Activated CD8-positive, alpha-beta T cell treated with anti-CD3 and anti-CD28 coated beads for 36 hours (primary cell): ENCODE measurements at regions of chr1 and their contacts with region 1.

Region 1: GRCh38 chr1:204494281-204495077 is at the start of gene PIK3C2B:
- DNase-seq: peak; percentile 81
- ATAC-seq: peak; percentile 80
- H3K4me3 Mint-ChIP-seq: peak within 1 kb of the TSS; percentile 88
- H3K27ac Mint-ChIP-seq: peak within 1 kb of the TSS; percentile 94
- H3K4me1 Mint-ChIP-seq: peaks cover 46% of the 10 kb centered on the region
- H3K27me3 Mint-ChIP-seq: no peaks in the 10 kb centered on the region
- CTCF ChIP-seq: peak; percentile 58
- total RNA-seq, gene PIK3C2B: 26.6 to 28.9 TPM

Region 2: DNA sequence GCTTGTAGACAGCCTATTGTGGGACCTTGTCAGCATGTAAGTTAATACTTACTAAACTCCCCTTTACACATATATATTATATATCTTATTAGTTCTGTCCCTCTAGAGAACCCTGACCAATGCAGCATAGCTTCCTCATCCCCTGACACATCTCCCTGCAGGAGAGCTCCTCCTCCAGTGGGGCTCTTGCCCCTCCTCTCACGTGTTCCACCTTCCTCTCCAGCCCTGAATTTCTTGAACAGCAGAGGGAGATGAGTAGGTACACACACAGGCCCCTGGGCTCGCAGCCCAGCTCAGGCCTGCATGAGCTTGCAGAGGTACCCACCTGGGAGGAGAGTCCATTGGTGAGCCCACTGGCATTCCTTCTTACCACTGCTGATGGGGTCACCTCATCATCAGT is 253.4 kb before region 1 on chr1:
- CTCF ChIA-PET with region 1: no interaction called
- POLR2A ChIA-PET with region 1: no interaction called
- intact Hi-C with region 1: no loop called
- DNase-seq: no peak
- ATAC-seq: no peak
- H3K4me3 Mint-ChIP-seq: no peak overlapping the region
- H3K27ac Mint-ChIP-seq: no peak overlapping the region
- H3K4me1 Mint-ChIP-seq: no peaks in the 10 kb centered on the region
- H3K27me3 Mint-ChIP-seq: peaks cover 1% of the 10 kb centered on the region
- CTCF ChIP-seq: no peak

Region 3: DNA sequence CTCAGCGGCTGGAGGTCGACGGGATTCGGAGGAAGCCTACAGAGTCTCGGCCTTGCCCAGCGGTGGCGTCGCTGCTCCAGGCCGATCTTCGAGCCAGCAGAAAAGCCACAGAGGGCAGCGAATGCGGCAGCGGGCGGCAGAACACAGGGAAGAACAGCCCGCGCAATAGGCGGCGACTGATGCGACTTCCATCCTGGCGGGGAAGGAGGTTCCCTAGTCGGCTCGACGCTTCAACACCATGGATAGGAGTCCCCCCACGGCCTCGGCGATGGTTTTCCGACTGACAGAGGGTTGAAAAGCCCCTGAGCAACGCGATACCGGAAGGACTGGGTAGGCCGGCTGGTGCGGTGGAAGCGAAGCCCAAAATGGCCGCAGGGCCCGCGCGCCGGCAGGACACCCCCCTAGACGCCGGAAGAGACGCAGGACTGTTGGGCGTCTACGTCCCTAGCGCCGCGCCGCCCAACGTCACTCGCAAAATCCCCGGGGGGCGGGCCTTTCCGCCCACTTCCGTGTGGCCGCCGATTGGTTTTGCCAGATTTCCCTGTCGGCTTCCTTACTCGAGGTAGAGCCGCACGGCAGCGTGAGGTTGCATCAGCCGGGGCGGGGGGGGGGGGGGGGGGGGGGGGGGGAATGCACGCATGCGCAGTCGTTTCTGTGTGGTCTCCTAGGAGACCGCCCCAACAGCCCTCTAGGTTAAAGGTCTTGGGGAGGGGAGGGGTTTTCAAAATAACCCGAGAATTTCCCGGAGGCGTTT is 82.9 kb before region 1 on chr1 and contains the start of gene PPP1R15B:
- CTCF ChIA-PET with region 1: interaction called, 3 read pairs
- POLR2A ChIA-PET with region 1: interaction called, 12 read pairs
- intact Hi-C with region 1: no loop called
- DNase-seq: peak; percentile 97
- ATAC-seq: peak; percentile 92
- H3K4me3 Mint-ChIP-seq: peak within 1 kb of the TSS; percentile 99
- H3K27ac Mint-ChIP-seq: peak within 1 kb of the TSS; percentile 100
- H3K4me1 Mint-ChIP-seq: peaks cover 19% of the 10 kb centered on the region
- H3K27me3 Mint-ChIP-seq: no peaks in the 10 kb centered on the region
- CTCF ChIP-seq: no peak
- total RNA-seq, gene PPP1R15B: 63.8 to 64.6 TPM

Region 4: DNA sequence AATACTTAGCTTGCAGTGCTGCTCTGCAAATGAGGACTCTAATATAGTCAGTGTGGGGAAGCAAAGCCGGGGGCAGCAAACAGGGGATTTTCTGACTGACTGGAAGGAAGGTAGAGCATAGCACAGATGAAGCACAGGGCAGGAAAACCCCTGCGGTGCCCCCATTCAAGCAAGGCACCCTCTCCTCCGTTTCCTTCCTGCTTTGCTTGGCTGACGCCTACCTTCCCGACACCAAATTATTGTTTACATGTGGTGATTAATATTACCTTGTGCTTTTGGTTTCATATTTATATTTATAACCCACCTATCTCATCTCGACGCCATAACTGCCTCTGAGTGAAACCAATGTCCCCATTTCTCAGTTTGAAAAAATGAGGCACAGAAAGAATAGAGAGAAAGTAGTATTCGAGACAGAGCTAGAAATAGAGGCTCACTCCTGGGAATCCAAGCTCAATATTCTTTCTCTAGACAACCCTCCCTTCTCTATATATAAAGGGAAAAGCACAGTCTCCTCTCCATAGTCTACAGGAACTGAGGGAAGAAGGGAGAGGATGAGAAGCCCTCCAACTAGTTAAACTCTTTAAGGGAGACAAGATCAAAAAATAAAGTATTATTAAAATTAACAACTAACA is 41.2 kb before region 1 on chr1:
- CTCF ChIA-PET with region 1: interaction called, 1,122 read pairs
- POLR2A ChIA-PET with region 1: interaction called, 14 read pairs
- intact Hi-C with region 1: no loop called
- DNase-seq: peak; percentile 92
- ATAC-seq: peak; percentile 98
- H3K4me3 Mint-ChIP-seq: peak overlapping the region; percentile 35
- H3K27ac Mint-ChIP-seq: peak overlapping the region; percentile 88
- H3K4me1 Mint-ChIP-seq: peaks cover 20% of the 10 kb centered on the region
- H3K27me3 Mint-ChIP-seq: no peaks in the 10 kb centered on the region
- CTCF ChIP-seq: no peak

Region 5: GRCh38 chr1:204465546-204466415 is 28.7 kb before region 1 on chr1:
- CTCF ChIA-PET with region 1: interaction called, 7 read pairs
- POLR2A ChIA-PET with region 1: interaction called, 11 read pairs
- intact Hi-C with region 1: no loop called
- DNase-seq: no peak
- ATAC-seq: no peak
- H3K4me3 Mint-ChIP-seq: no peak overlapping the region
- H3K27ac Mint-ChIP-seq: peak overlapping the region; percentile 39
- H3K4me1 Mint-ChIP-seq: peaks cover 53% of the 10 kb centered on the region
- H3K27me3 Mint-ChIP-seq: no peaks in the 10 kb centered on the region
- CTCF ChIP-seq: no peak

Region 6: GRCh38 chr1:204480515-204480914 is 14.0 kb before region 1 on chr1:
- CTCF ChIA-PET with region 1: interaction called, 12 read pairs
- POLR2A ChIA-PET with region 1: interaction called, 21 read pairs
- intact Hi-C with region 1: no loop called
- DNase-seq: peak; percentile 40
- ATAC-seq: peak; percentile 69
- H3K4me3 Mint-ChIP-seq: no peak overlapping the region
- H3K27ac Mint-ChIP-seq: no peak overlapping the region
- H3K4me1 Mint-ChIP-seq: peaks cover 55% of the 10 kb centered on the region
- H3K27me3 Mint-ChIP-seq: no peaks in the 10 kb centered on the region
- CTCF ChIP-seq: no peak